Esophagus muscularis mucosa (tissue), 4 donors: ENCODE measurements at regions of chr12 and their contacts with region 1.

Region 1: GRCh38 chr12:4648501-4649357 is at the starts of genes AKAP3 and NDUFA9:
- DNase-seq: peak; percentile 95
- H3K4me3 ChIP-seq: peak within 1 kb of the TSS; percentile 59 to 85 (median 73)
- H3K27ac ChIP-seq: peak within 1 kb of the TSS; percentile 74 to 88 (median 86)
- H3K4me1 ChIP-seq: peaks cover 36 to 54% (median 43%) of the 10 kb centered on the region in 4 donors
- H3K27me3 ChIP-seq: no peaks in the 10 kb centered on the region
- CTCF ChIP-seq: peak in 1 of 3 experiments; percentile 25
- EP300 ChIP-seq: no peak
- POLR2A ChIP-seq: no peak
- total RNA-seq, gene AKAP3: 0.39 to 0.83 (median 0.73) TPM
- total RNA-seq, gene NDUFA9: 18.7 to 56.1 (median 32.7) TPM

Region 2: DNA sequence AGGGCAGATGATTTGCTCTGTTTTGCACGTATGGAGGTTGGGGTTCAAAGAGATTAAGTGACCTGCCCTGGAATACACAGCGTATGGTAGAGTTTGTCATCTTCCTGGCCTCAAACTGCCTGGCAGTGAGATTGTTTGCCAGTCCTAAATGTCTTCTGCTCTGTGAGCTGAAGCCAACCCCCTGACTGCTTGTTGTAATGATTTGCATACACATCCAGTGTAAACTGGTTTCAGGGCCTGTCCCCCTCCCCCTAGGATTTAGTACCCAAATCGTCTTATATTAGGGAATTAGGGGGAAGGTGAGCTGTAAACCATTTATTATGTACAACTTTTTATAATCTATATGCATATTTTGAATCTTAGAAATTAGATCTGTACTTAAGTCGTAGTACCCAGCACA is 38.2 kb before region 1 on chr12:
- intact Hi-C with region 1: loop called (anchors 5 kb)
- DNase-seq: no peak
- H3K4me3 ChIP-seq: no peak overlapping the region
- H3K27ac ChIP-seq: no peak overlapping the region
- H3K4me1 ChIP-seq: peaks cover 14 to 25% (median 20%) of the 10 kb centered on the region in 4 donors
- H3K27me3 ChIP-seq: no peaks in the 10 kb centered on the region
- CTCF ChIP-seq: no peak
- EP300 ChIP-seq: no peak
- POLR2A ChIP-seq: no peak

Region 3: GRCh38 chr12:4719821-4720636 is 71.3 kb after region 1 on chr12 and contains the start of gene GALNT8:
- intact Hi-C with region 1: no loop called
- DNase-seq: peak; percentile 47
- H3K4me3 ChIP-seq: no peak within 1 kb of the TSS
- H3K27ac ChIP-seq: no peak within 1 kb of the TSS
- H3K4me1 ChIP-seq: no peaks in the 10 kb centered on the region
- H3K27me3 ChIP-seq: peaks cover 0 to 7% (median 0%) of the 10 kb centered on the region in 4 donors
- CTCF ChIP-seq: no peak
- EP300 ChIP-seq: no peak
- POLR2A ChIP-seq: no peak
- total RNA-seq, gene GALNT8: 0.98 to 2.7 (median 1.5) TPM